ENCODE measurements at regions of chr12 and their contacts with region 1.

Region 1: GRCh38 chr12:5988659-5989116 is 43.6 kb upstream of the ANO2 start:
- DNase-seq: peak; percentile 73 to 86 (median 80)
- H3K4me3 ChIP-seq: no peak overlapping the region
- H3K27ac ChIP-seq: no peak overlapping the region
- H3K27me3 ChIP-seq: peaks cover 0 to 5% (median 0%) of the 10 kb centered on the region in 45 donors
- CTCF ChIP-seq: peak; percentile 59 to 100 (median 96)

Region 2: DNA sequence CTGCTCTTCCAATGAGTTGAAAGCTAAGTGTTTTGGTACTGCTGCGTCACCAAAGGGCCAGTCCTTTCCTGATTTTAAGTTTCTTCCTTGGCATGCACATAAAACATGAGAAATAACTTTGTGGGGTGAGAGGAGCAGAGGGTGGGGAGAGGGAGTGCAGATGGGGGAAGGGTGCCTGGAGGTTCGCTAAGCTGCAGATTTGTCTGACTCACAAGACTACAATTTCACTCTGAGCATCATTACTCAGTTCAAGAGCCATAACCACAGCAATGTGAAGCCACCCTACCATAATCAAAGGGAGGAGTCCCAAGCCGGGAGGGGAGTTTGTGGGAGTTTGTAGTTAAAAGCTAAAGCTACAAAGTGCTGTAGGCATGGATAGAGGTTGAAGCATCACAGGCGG is 179.7 kb before region 1 on chr12:
- intact Hi-C with region 1: no loop called
- DNase-seq: no peak
- H3K4me3 ChIP-seq: peak overlapping the region in 1 of 59 donors; percentile 2
- H3K27ac ChIP-seq: no peak overlapping the region
- H3K27me3 ChIP-seq: peaks cover 0 to 20% (median 0%) of the 10 kb centered on the region in 45 donors
- CTCF ChIP-seq: no peak

Region 3: GRCh38 chr12:5912437-5913334 is 76.0 kb before region 1 on chr12:
- intact Hi-C with region 1: no loop called
- DNase-seq: no peak
- H3K4me3 ChIP-seq: no peak overlapping the region
- H3K27ac ChIP-seq: no peak overlapping the region
- H3K27me3 ChIP-seq: no peaks in the 10 kb centered on the region
- CTCF ChIP-seq: peak in 1 of 56 donors; percentile 7

Region 4: DNA sequence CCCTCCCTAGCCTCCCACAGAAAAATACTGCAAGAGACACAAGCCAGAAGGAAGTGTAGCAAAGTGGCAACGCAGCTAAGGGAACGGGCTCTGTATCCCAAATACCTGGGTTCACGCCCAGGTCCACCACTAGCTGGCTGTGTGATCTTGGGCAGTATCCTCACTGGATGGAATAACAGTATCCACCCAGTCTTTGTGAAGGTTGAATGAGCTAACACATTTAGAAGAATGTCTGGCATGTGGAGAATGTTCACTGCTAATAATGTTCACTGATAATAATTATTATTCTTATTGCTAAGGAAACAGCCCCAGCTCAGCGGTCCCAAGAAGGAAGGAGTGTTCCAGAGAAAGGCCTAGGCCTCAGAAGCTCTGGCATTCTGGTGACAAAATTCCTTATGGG is 64.9 kb after region 1 on chr12:
- intact Hi-C with region 1: no loop called
- DNase-seq: no peak
- H3K4me3 ChIP-seq: no peak overlapping the region
- H3K27ac ChIP-seq: no peak overlapping the region
- H3K27me3 ChIP-seq: peaks cover 0 to 25% (median 6%) of the 10 kb centered on the region in 45 donors
- CTCF ChIP-seq: no peak

Region 5: GRCh38 chr12:6285063-6285477 is 296.4 kb after region 1 on chr12:
- intact Hi-C with region 1: loop called (anchors 2 kb)
- DNase-seq: peak in 8 of 10 donors; percentile 28 to 73 (median 46)
- H3K4me3 ChIP-seq: no peak overlapping the region
- H3K27ac ChIP-seq: peak overlapping the region in 1 of 59 donors; percentile 10
- H3K27me3 ChIP-seq: peaks cover 0 to 12% (median 0%) of the 10 kb centered on the region in 45 donors
- CTCF ChIP-seq: peak; percentile 87 to 100 (median 96)

Region 6: GRCh38 chr12:7638760-7639555 is 1650.3 kb after region 1 on chr12:
- intact Hi-C with region 1: no loop called
- DNase-seq: peak; percentile 36 to 83 (median 72)
- H3K4me3 ChIP-seq: peak overlapping the region in 48 of 59 donors; percentile 12 to 60 (median 39)
- H3K27ac ChIP-seq: peak overlapping the region in 7 of 59 donors; percentile 1 to 67 (median 18)
- H3K27me3 ChIP-seq: peaks cover 0 to 9% (median 0%) of the 10 kb centered on the region in 45 donors
- CTCF ChIP-seq: peak; percentile 89 to 99 (median 97)

Measured in dorsolateral prefrontal cortex (tissue), 120 donors.